BJ (cell line): ENCODE measurements at regions of chr9 and their contacts with region 1.

Region 1: DNA sequence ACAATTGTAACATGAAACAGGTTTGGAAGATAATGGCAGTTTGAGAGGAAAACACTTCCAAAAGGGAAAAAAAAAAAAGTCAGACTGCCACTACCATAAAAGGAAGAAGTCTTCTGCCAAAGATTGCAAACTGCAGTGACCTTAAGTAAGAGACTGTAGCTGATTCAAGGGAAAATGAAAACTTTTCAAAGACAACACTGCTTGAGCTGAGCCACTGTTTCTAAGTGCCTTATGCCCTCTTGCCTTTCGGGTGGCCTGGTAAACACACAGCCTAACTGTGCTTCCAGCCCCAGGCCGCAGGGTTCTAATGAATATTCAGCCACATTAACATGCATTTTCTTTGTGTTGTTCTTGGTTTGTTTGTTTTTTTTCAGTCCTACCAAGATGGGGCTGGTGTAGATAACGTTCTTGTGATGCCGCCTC is 354.6 kb downstream of the BNC2 start:
- DNase-seq: no peak
- H3K4me3 ChIP-seq: no peak overlapping the region
- H3K27me3 ChIP-seq: no peaks in the 10 kb centered on the region
- CTCF ChIP-seq: no peak

Region 2: GRCh38 chr9:16396389-16396788 is 119.5 kb before region 1 on chr9:
- CTCF ChIA-PET with region 1: no interaction called
- POLR2A ChIA-PET with region 1: no interaction called
- DNase-seq: no peak
- H3K4me3 ChIP-seq: no peak overlapping the region
- H3K27me3 ChIP-seq: no peaks in the 10 kb centered on the region
- CTCF ChIP-seq: no peak

Region 3: DNA sequence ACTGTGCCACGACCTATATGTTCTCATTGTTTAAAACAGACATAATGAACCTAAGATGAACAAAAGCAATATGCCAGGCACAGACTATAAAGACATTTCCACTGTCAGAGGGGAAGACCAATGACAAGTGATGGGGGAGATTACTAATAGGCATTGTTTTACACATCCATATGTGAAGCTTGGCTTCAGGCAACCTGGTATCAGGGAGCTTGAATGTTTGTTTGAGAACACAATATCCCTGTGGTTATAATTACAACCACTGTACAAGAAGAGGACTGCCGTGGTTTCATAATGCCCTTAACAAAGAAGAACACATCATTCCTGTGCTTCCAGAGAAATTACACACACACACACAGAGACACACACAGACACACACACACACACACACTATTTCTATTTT is 31.1 kb before region 1 on chr9:
- CTCF ChIA-PET with region 1: no interaction called
- POLR2A ChIA-PET with region 1: no interaction called
- DNase-seq: no peak
- H3K4me3 ChIP-seq: no peak overlapping the region
- H3K27me3 ChIP-seq: no peaks in the 10 kb centered on the region
- CTCF ChIP-seq: no peak

Region 4: GRCh38 chr9:16530669-16531642 is 15.1 kb after region 1 on chr9:
- CTCF ChIA-PET with region 1: no interaction called
- POLR2A ChIA-PET with region 1: no interaction called
- DNase-seq: no peak
- H3K4me3 ChIP-seq: no peak overlapping the region
- H3K27me3 ChIP-seq: no peaks in the 10 kb centered on the region
- CTCF ChIP-seq: no peak

Region 5: GRCh38 chr9:16591092-16591491 is 75.2 kb after region 1 on chr9:
- CTCF ChIA-PET with region 1: no interaction called
- POLR2A ChIA-PET with region 1: interaction called, 15 read pairs
- DNase-seq: no peak
- H3K4me3 ChIP-seq: no peak overlapping the region
- H3K27me3 ChIP-seq: no peaks in the 10 kb centered on the region
- CTCF ChIP-seq: no peak